ENCODE measurements at regions of chr1 and their contacts with region 1.

Region 1: DNA sequence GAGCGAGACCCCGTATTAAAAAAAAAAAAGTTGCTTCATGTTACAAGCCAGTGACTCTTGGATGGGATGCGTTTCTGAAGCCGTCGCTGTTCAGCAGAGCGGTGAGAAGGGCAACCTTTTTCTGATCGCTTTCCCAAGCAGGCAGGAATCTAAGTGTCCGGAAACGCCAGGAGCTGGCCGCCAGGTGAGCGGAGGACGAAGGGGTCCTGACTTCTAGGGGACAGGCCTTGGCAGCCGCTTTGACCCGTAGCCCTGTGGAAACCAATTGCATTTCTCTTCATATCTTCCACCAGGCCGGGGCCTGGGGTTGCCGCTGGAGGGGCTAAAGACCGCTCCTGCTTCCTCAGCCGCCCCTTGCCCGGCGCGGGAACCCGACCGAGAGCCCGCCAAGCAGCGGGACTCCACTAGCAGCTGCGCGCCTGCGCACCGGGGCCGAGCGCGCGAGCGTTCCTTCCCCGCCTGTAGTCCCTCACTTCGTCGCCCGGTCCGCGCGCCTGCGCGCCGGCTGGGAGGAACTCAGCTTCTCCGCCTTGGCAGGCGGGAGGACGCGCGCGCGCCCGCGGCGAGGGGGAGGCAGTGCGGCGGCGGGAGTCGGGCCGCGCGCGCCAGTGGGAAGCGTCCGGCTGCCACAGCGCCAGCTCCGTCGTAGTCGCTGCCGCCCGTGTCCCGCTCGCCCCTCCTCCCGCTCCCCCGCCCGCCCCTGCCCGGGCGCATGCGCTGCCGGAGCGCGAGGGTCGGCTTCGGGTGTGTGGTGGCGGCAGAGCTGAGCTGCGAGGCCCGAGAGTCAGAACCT is at the start of gene SPEN:
- DNase-seq: peak; percentile 99
- ATAC-seq: peak; percentile 88
- H3K4me3 Mint-ChIP-seq: peak within 1 kb of the TSS; percentile 91
- H3K27ac Mint-ChIP-seq: peak within 1 kb of the TSS; percentile 94
- H3K4me1 Mint-ChIP-seq: peaks cover 47% of the 10 kb centered on the region
- H3K27me3 Mint-ChIP-seq: no peaks in the 10 kb centered on the region
- total RNA-seq, gene SPEN: 43.2 to 52.7 TPM

Region 2: DNA sequence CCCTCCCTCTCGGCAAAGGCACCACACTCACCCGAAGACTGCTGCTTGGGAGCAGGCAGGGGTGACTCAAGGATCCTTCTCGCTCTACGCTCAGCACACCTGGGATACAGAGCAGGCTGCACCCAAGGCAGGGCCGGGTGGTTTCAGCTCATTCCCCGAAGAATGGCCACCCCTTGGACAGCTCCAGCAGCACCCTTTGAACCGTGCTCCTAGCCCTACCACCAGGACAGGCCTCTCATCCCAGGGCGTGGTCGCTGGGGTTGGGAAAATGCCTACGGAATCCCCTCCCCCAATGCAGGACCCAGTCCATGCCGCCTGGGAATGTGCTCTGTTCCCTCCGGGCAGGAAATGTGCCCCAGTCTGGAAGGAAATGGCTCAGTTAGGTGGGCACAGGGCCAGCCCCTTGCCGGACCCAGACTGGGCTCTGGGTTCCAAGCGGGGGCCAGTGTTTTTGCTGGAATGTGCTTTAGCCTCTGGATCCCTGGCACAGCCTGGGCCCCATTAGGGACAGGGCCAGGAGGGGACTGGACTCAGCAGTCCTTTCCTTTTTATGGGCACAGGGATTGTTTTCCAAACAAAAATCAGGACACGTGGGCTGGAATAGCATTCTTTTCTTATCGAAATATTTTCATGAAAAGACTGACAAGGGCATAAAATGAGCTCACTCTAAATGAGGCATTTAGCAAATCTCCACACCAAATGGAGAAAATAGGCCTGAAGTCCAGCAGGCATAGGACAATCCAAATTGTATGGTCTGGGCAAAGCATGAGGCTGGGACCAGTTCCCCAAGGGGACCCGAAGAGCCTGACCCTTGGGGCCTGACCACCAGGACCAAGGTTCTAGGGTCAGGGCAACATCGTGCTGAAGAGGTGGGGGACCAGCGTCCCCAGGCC is 97.7 kb before region 1 on chr1:
- CTCF ChIA-PET with region 1: no interaction called
- POLR2A ChIA-PET with region 1: no interaction called
- intact Hi-C with region 1: no loop called
- DNase-seq: no peak
- ATAC-seq: no peak
- H3K4me3 Mint-ChIP-seq: no peak overlapping the region
- H3K27ac Mint-ChIP-seq: no peak overlapping the region
- H3K4me1 Mint-ChIP-seq: no peaks in the 10 kb centered on the region
- H3K27me3 Mint-ChIP-seq: no peaks in the 10 kb centered on the region

Region 3: DNA sequence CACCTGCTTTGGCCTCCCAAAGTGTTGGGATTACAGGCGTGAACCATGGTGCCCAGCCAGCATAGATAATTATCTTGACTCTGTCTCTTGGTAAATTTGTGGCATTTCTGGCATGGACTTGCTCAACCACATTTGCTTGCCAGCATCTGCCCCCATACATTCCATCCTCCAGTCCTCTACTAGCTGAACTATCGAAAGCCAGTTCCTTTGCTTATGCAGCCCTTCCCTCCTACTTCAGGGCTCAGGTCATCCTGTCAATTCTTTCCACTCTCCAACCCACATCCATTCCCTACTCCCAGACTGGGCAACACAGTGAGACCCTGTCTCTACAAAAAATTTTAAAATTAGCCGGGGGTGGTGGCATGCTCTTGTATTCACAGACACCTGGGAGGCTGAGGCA is 26.8 kb before region 1 on chr1:
- CTCF ChIA-PET with region 1: interaction called, 7 read pairs
- POLR2A ChIA-PET with region 1: interaction called, 3 read pairs
- intact Hi-C with region 1: loop called in 1 of 2 experiments (anchors 1 kb)
- DNase-seq: no peak
- ATAC-seq: no peak
- H3K4me3 Mint-ChIP-seq: no peak overlapping the region
- H3K27ac Mint-ChIP-seq: no peak overlapping the region
- H3K4me1 Mint-ChIP-seq: peaks cover 6% of the 10 kb centered on the region
- H3K27me3 Mint-ChIP-seq: no peaks in the 10 kb centered on the region

Region 4: DNA sequence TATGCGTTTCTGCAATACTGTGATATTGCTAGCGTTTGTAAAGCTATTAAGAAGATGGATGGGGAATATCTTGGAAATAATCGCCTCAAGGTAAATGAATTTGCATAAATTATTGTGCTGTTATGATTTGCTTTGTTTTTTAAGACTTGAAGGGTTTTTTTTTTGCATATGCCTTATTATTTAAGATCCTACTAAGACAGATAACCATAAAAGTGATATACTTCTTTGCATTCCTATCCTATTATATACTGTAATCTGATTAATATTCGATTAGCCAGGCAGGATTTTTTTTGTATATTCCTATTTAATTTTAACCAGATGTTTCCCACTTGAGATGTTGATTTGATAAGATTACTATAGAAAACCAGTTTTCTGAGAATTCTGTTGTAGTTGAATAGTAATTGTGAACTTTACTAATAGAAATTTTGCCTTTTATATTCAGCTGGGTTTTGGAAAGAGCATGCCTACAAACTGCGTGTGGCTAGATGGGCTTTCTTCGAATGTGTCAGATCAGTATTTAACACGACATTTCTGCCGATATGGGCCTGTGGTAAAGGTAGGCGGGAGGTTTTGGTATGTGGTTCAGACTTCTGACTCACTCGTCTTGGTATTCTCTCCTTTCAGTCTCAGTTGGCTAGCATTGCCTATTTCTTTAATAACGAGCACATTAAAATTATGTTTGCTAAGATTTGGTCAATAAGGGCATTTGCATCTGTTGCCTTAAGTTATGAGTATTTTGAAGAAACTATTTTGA is 71.8 kb after region 1 on chr1:
- CTCF ChIA-PET with region 1: no interaction called
- POLR2A ChIA-PET with region 1: no interaction called
- intact Hi-C with region 1: loop called in 1 of 2 experiments (anchors 5 kb)
- DNase-seq: peak; percentile 87
- ATAC-seq: peak; percentile 96
- H3K4me3 Mint-ChIP-seq: peak overlapping the region; percentile 17
- H3K27ac Mint-ChIP-seq: no peak overlapping the region
- H3K4me1 Mint-ChIP-seq: peaks cover 35% of the 10 kb centered on the region
- H3K27me3 Mint-ChIP-seq: no peaks in the 10 kb centered on the region

Region 5: DNA sequence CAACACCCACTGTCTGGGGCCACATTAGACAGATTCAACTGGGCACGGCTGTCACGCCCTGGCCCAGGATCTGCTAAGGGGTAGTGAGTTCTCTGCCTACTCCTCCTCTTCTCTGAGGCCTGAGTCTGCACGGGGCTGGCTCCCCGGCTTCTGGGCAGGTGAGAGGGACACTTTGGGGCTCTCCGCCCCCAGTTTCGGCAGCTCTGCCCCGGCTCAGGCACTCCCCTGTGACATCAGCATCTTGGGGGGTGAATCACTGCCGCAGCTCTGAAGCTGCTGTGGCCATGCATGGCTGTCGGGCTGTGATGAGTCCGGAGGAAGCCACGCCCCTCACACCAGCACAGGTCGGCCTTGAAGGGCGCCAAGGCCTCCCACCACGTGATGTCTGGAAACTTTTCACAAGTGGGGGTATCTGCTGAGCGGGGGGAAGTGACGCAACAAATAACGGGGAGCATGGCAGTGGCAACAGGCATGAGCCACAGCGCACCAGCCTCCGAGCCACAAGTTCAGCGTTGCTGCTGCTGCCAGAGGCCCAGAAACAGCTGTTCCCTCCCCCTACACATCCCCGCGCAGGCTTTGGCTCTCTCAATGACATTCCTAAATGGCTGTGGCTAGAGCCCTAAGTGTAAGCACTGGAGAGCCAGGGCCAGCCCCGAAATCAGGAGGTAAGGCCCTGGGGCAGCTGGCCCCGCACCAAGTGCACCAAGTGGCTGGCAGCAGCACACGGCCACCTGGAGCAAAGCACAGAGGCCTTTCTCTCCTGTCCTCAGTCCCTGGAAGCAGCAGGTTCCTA is 102.4 kb after region 1 on chr1:
- CTCF ChIA-PET with region 1: interaction called, 3 read pairs
- POLR2A ChIA-PET with region 1: interaction called, 3 read pairs
- intact Hi-C with region 1: loop called in 1 of 2 experiments (anchors 1 kb)
- DNase-seq: peak; percentile 94
- ATAC-seq: peak; percentile 75
- H3K4me3 Mint-ChIP-seq: peak overlapping the region; percentile 61
- H3K27ac Mint-ChIP-seq: peak overlapping the region; percentile 95
- H3K4me1 Mint-ChIP-seq: peaks cover 74% of the 10 kb centered on the region
- H3K27me3 Mint-ChIP-seq: no peaks in the 10 kb centered on the region

Region 6: GRCh38 chr1:15966081-15966955 is 119.0 kb after region 1 on chr1:
- CTCF ChIA-PET with region 1: interaction called, 3 read pairs
- POLR2A ChIA-PET with region 1: interaction called, 6 read pairs
- intact Hi-C with region 1: loop called (anchors 1 kb)
- DNase-seq: peak; percentile 93
- ATAC-seq: peak; percentile 79
- H3K4me3 Mint-ChIP-seq: peak overlapping the region; percentile 54
- H3K27ac Mint-ChIP-seq: peak overlapping the region; percentile 98
- H3K4me1 Mint-ChIP-seq: peaks cover 83% of the 10 kb centered on the region
- H3K27me3 Mint-ChIP-seq: no peaks in the 10 kb centered on the region

Region 7: DNA sequence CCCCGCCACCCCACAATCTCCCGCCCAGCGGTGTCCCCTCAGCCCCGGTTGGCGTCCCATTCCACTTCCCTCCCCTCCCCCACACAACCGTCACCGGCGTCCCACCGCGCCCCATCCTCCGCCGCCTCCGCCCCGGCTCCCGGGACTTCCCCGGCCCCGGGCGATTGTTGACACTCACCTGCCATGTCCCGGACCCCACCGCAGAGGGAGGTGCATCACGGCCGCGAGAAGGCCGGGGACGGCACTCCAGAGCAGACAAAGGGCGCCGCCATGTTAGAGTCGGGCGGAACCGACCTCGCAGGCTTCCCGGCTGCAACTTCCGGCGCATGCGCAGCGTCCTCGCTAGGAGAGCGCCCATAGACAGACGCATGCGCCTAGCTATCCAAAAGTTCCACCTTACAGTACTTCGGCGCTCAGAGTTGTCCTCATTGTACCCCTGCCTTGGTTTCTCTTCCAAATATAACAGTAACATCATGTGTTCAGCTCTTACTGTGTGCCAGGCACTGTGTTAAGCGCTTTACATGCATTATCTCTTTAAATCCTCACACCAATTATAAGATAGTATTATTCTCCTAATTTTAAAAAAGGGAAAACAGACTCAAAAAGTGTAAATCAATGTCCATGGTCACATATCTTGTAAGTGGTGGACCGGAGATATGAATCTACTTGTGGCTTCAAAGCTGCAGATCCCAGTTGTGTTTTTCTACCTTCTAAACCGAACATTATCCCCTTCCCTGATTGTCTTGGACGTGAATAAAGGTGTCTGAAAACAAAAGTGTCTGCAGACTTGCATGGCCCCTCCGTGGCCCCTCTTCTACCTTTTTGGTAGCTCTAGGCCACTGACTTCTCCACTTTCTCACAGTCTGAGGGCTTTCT is 128.7 kb after region 1 on chr1 and contains the start of gene ZBTB17:
- CTCF ChIA-PET with region 1: interaction called, 4 read pairs
- POLR2A ChIA-PET with region 1: interaction called, 3 read pairs
- intact Hi-C with region 1: loop called in 1 of 2 experiments (anchors 1 kb)
- DNase-seq: peak; percentile 98
- ATAC-seq: peak; percentile 89
- H3K4me3 Mint-ChIP-seq: peak within 1 kb of the TSS; percentile 85
- H3K27ac Mint-ChIP-seq: peak within 1 kb of the TSS; percentile 93
- H3K4me1 Mint-ChIP-seq: peaks cover 42% of the 10 kb centered on the region
- H3K27me3 Mint-ChIP-seq: no peaks in the 10 kb centered on the region
- total RNA-seq, gene ZBTB17: 47.7 to 48.3 TPM

Region 8: DNA sequence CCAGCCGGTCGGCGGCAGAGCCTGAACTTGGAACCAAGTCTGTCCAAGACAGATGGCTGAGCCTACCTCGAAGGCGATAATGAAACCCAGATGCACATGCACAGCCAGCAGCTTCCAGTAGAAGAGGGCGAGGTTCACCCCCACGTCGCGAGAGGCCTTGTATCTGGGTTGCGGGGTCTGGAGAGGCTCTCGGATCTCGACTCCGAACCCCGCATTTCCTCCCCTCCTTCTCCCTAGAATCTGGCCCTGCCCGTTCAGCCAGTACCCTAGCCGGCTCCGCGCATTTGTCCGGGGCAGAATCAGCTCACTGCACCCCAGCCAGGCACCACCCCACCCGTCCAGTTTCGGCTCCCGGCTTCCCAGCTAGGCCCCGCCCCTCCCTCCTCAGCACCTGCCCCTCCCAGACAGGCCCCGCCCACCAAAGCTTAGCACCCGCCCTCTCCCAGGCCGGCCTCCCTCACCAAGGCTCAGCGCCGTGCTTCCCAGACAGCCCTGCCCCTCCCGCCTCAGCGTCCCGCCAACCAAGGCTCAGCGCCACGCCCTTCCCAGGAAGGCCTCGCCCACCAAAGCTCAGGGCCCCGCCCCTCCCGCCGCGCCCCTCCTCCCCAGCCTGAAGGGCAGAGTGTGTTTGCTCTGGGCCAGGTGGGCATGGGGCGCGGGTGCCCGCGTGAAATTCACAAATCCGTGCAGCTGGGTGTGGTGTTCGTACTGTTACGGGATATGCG is 369.9 kb after region 1 on chr1:
- CTCF ChIA-PET with region 1: no interaction called
- POLR2A ChIA-PET with region 1: no interaction called
- intact Hi-C with region 1: loop called in 1 of 2 experiments (anchors 1 kb)
- DNase-seq: peak; percentile 98
- ATAC-seq: peak; percentile 98
- H3K4me3 Mint-ChIP-seq: peak overlapping the region; percentile 73
- H3K27ac Mint-ChIP-seq: peak overlapping the region; percentile 20
- H3K4me1 Mint-ChIP-seq: peaks cover 20% of the 10 kb centered on the region
- H3K27me3 Mint-ChIP-seq: no peaks in the 10 kb centered on the region

Measured in activated CD4-positive, alpha-beta T cell treated with anti-CD3 and anti-CD28 coated beads for 36 hours (primary cell).